ENCODE measurements at regions of chr12 and their contacts with region 1.

Region 1: DNA sequence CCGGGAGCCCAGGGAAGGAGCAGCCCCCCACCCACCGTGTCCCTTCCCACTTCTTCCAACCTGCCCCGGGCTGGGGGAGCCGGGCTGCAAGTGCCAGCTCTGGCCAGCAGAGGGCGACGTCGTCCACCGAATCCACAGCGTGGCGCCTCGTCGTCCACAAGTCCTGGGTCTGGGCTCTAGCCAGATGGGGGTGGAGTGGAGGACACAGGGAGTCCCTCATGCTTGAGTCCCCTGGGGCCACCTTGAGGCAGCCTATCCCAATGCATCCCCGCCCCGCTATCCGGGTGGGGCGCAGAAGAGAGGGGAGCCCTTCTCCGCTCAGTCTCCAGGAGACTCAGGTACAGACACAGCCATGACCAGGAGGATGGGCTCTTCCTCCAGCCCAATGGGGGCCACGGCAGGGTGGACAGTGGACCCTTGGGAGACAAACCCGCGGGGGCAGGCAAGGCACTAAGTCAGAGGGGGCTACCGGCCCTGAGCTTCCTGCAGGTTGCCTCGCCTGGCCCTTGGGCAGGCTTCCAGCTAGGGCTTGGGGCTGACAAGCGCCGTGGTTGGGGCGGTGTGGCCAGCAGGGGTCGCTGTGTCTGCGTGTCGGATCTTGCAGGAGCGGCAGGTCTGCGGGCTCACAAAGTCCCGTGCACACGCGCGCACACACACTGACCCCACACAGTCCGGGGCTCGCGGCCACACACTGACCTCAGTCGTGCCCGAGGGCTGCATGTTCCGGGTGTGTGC is 5.5 kb downstream of the AQP5 start:
- DNase-seq: peak; percentile 95
- ATAC-seq: peak; percentile 76
- H3K4me3 Mint-ChIP-seq: peak overlapping the region; percentile 59
- H3K27ac Mint-ChIP-seq: no peak overlapping the region
- H3K4me1 Mint-ChIP-seq: peaks cover 10% of the 10 kb centered on the region
- H3K27me3 Mint-ChIP-seq: peaks cover 33% of the 10 kb centered on the region
- CTCF ChIP-seq: peak; percentile 91

Region 2: GRCh38 chr12:49776413-49776812 is 190.8 kb before region 1 on chr12:
- CTCF ChIA-PET with region 1: interaction called, 13 read pairs
- POLR2A ChIA-PET with region 1: no interaction called
- DNase-seq: peak; percentile 72
- ATAC-seq: peak; percentile 89
- H3K4me3 Mint-ChIP-seq: no peak overlapping the region
- H3K27ac Mint-ChIP-seq: no peak overlapping the region
- H3K4me1 Mint-ChIP-seq: peaks cover 17% of the 10 kb centered on the region
- H3K27me3 Mint-ChIP-seq: peaks cover 20% of the 10 kb centered on the region
- CTCF ChIP-seq: peak; percentile 50

Region 3: DNA sequence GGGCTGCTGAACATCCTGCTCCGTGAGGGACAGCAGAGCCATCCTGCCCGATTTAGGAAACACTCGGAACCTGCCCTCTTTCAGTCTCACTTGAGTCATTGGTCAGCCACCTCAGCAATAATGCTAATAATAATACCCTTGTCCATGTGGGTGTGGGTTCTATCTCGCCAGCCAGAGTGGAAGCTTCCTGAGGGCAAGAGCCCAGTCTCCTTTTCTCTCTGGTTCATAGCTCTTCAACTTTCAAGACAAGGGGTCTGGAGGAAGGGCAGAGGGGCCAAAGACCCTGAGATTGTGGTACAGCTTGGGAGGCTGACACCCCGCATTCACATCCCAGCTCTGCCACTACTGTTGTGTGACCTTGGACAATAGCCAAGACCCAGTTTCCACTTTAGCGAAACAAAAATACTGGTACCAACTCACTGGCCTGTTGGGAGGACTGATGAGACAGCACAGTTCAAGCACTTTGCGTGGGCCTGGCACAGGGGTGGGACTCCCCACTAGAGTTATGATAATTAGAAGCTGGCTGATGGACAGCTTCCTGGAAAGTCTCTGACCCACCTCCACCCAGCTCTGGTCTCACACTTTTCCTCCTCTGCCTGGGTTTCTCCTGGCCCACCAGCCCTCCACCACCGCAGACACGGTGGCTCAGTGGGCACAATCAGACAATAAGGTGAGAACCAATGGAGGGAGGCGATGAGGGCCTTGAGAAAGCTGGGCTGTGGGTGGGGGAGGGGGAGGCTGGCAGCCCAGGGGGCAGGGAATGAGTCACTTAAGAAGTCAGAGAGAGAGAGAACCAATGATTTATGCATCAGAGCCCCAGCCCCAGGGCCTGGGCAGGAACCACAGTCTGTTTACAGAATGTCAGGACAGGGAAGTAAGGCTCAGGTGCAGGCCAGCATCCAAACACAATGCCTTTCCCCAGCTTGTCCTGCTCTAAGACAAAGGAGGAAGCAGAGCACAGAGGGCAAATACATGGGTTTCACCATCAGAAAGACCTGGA is 73.2 kb before region 1 on chr12:
- CTCF ChIA-PET with region 1: interaction called, 11 read pairs
- POLR2A ChIA-PET with region 1: no interaction called
- DNase-seq: no peak
- ATAC-seq: peak; percentile 19
- H3K4me3 Mint-ChIP-seq: no peak overlapping the region
- H3K27ac Mint-ChIP-seq: no peak overlapping the region
- H3K4me1 Mint-ChIP-seq: peaks cover 12% of the 10 kb centered on the region
- H3K27me3 Mint-ChIP-seq: peaks cover 7% of the 10 kb centered on the region; the same call in 1 of the 2 replicates
- CTCF ChIP-seq: no peak

Region 4: GRCh38 chr12:49983892-49984291 is 16.7 kb after region 1 on chr12:
- CTCF ChIA-PET with region 1: interaction called, 120 read pairs
- POLR2A ChIA-PET with region 1: no interaction called
- DNase-seq: no peak
- ATAC-seq: no peak
- H3K4me3 Mint-ChIP-seq: no peak overlapping the region
- H3K27ac Mint-ChIP-seq: no peak overlapping the region
- H3K4me1 Mint-ChIP-seq: peaks cover 26% of the 10 kb centered on the region
- H3K27me3 Mint-ChIP-seq: no peaks in the 10 kb centered on the region
- CTCF ChIP-seq: no peak

Region 5: DNA sequence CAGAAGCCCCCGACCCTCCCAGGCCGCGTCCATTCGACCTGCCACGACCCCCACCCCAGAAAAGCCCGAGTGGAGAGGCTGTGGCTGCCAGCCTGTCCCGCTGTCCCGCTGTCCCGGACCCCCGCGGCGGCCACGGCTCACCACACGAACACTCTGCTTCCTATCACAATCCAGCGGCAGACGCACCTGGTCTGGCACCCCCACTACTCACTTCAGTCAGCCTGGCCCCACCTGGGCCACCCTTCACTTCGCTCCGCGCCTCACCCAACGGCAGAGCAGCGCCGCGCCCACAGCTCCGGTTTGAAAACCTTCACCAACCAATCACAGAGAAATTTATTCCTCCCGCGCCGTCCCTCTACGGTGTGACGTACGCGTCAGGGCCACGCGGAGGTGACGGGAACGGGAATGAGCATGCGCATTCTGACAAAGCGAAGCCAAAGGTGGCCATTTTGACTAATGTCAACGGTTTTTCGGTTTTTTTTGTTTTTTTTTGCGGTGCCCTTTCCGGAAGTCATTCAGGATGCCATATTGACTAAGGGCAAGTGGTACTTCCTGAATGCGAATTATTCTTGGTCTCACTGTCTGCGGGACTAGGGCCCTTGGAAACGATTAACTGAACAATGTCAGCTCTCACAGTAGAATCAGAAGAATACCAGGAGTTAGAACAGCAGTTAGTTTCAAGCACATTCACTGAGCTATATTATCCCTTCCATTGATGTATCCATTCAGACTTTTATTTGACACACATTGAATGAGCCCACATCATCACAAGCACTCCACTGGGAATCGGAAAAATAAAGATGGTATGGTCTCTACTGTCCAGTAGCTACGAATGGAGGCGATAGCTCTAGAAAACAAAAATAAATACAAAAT is 58.2 kb after region 1 on chr12 and contains the start of gene RACGAP1:
- CTCF ChIA-PET with region 1: interaction called, 10 read pairs
- POLR2A ChIA-PET with region 1: no interaction called
- DNase-seq: peak; percentile 95
- ATAC-seq: peak; percentile 99
- H3K4me3 Mint-ChIP-seq: peak within 1 kb of the TSS; percentile 95
- H3K27ac Mint-ChIP-seq: peak within 1 kb of the TSS; percentile 97
- H3K4me1 Mint-ChIP-seq: peaks cover 9% of the 10 kb centered on the region
- H3K27me3 Mint-ChIP-seq: no peaks in the 10 kb centered on the region
- CTCF ChIP-seq: no peak
- total RNA-seq, gene RACGAP1: 76.6 to 87.7 TPM (median 77.3 TPM) in 3 replicates

Region 6: DNA sequence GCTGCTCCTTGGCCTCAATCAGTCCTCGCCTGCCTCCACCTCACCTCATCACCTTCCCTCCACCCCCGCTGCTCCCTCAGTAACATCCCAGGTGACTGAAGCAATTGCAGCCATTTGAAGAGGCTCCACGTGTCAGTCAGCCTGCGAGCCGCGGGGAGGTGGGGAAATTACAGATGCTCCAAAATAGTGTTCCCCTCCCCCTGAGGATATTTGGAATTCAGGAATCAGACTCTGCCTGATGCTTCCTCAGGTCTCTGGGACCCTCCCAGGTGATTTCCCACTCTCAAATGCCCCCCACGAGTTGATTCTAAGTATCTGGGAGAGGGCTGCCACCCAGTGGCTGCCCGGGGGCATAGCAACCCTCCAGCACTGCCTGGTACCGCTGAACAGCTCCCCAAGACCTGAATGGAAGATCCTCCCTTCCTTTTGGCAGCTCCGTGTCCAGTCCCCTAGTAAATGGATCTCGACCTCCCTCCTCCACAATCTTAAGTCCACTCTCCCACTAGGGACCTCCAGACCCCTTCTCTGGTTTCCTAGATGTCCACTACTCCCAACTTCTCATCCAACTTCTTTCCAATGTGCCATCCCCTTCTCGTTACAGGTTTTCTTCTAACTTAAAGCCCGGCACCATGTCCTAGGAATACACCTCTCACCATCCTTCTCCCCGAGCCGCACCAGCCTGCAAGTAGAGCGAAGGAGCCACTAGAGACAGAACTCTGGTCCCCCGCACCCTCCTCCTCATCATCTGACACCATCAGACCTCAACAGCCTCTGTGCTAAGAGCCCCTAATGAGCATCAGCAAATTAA is 88.8 kb after region 1 on chr12:
- CTCF ChIA-PET with region 1: interaction called, 114 read pairs
- POLR2A ChIA-PET with region 1: interaction called, 7 read pairs
- DNase-seq: peak; percentile 72
- ATAC-seq: peak; percentile 46
- H3K4me3 Mint-ChIP-seq: peak overlapping the region; percentile 79
- H3K27ac Mint-ChIP-seq: no peak overlapping the region
- H3K4me1 Mint-ChIP-seq: peaks cover 25% of the 10 kb centered on the region
- H3K27me3 Mint-ChIP-seq: peaks cover 95% of the 10 kb centered on the region
- CTCF ChIP-seq: peak; percentile 94

Region 7: GRCh38 chr12:50119387-50119786 is 152.2 kb after region 1 on chr12:
- CTCF ChIA-PET with region 1: no interaction called
- POLR2A ChIA-PET with region 1: no interaction called
- DNase-seq: no peak
- ATAC-seq: no peak
- H3K4me3 Mint-ChIP-seq: no peak overlapping the region
- H3K27ac Mint-ChIP-seq: no peak overlapping the region
- H3K4me1 Mint-ChIP-seq: no peaks in the 10 kb centered on the region; the same call in 1 of the 2 replicates
- H3K27me3 Mint-ChIP-seq: no peaks in the 10 kb centered on the region
- CTCF ChIP-seq: no peak

Measured in WTC11 (cell line).